Lower leg skin (tissue), 4 donors: ENCODE measurements at regions of chr2 and their contacts with region 1.

Region 1: DNA sequence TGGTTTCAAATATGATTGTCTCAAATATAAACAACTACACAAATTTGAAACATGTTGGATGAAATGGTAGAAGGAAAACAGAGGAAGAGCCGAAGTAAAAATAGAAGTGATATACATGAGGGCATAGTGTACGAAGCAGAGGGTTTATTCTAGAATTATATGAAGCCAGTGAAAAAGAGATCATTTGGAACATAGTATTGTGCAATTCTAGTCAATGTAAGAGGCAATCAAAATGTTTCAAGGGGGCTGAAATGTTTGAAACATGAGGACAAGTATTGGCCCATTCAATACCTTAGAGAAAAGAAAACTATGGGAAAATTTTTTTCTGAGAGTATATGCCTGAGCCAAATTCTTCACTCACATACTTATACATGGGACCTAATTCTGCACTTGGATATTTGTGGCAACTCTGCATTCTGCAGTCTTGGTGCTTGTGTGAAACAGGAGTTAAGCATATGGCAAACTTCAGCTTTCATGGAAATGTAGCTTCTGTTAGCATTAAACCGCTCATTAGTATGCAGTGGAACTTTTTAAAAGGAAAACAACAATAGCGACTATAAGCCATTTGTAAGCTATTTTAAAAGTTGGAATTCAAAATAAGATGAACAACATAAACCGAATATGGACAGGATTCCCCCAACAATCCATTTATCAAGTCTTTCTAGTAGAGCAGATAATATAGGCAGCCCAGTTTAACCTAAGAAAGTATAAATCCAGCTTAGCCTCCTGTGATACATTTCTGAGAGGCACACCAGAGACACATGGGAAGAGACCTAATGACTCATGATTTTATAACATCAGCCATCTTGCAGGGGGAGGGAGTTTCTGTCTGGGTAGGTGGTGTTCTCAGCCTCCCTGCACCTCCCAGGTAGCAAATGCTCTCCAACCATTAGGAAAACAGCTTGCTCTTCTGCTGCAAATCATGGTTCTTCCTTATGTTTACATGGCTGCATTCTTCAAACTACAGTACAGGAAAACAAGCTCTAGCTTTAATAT is 197.8 kb downstream of the PAX3 start:
- DNase-seq: no peak
- H3K4me3 ChIP-seq: no peak overlapping the region
- CTCF ChIP-seq: no peak
- POLR2A ChIP-seq: no peak

Region 2: GRCh38 chr2:222127660-222128059 is 26.7 kb after region 1 on chr2:
- intact Hi-C with region 1: loop called (anchors 1 kb)
- DNase-seq: no peak
- H3K4me3 ChIP-seq: no peak overlapping the region
- CTCF ChIP-seq: no peak
- POLR2A ChIP-seq: no peak

Region 3: DNA sequence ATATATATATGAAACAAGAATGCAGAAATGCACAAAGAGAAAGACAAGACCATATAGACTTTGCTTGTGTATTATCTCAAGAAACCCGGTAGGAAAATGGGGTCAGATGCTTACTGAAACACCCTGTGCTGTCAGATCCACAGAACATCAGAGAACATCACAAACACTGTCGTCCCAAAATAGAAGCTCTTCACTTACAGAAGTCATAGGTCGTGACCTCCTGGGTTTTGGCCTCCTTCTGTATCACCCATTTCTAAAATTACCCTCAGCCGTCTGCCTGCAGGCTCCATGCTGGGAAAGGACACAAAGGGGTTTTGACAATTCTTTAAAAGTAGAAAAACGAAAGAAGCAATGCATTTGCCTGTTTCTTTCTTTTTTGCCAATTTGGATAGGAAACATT is 59.9 kb after region 1 on chr2:
- intact Hi-C with region 1: no loop called
- DNase-seq: no peak
- H3K4me3 ChIP-seq: no peak overlapping the region
- CTCF ChIP-seq: no peak
- POLR2A ChIP-seq: no peak

Region 4: GRCh38 chr2:222232372-222232771 is 131.4 kb after region 1 on chr2:
- intact Hi-C with region 1: no loop called
- DNase-seq: no peak
- H3K4me3 ChIP-seq: no peak overlapping the region
- CTCF ChIP-seq: no peak
- POLR2A ChIP-seq: no peak